Activated CD4-positive, alpha-beta T cell treated with anti-CD3 and anti-CD28 coated beads for 36 hours (primary cell): ENCODE measurements at regions of chr16 and their contacts with region 1.

Region 1: GRCh38 chr16:46689365-46690280 is at the start of gene ORC6:
- DNase-seq: peak; percentile 99
- ATAC-seq: peak; percentile 83
- H3K4me3 Mint-ChIP-seq: no peak within 1 kb of the TSS
- H3K27ac Mint-ChIP-seq: no peak within 1 kb of the TSS
- H3K4me1 Mint-ChIP-seq: peaks cover 43% of the 10 kb centered on the region
- H3K27me3 Mint-ChIP-seq: no peaks in the 10 kb centered on the region
- total RNA-seq, gene ORC6: 30.3 to 43.4 TPM

Region 2: GRCh38 chr16:46568472-46569230 is 121.0 kb before region 1 on chr16:
- CTCF ChIA-PET with region 1: no interaction called
- POLR2A ChIA-PET with region 1: no interaction called
- intact Hi-C with region 1: no loop called
- DNase-seq: no peak
- ATAC-seq: no peak
- H3K4me3 Mint-ChIP-seq: no peak overlapping the region
- H3K27ac Mint-ChIP-seq: no peak overlapping the region
- H3K4me1 Mint-ChIP-seq: no peaks in the 10 kb centered on the region
- H3K27me3 Mint-ChIP-seq: peaks cover 2% of the 10 kb centered on the region

Region 3: DNA sequence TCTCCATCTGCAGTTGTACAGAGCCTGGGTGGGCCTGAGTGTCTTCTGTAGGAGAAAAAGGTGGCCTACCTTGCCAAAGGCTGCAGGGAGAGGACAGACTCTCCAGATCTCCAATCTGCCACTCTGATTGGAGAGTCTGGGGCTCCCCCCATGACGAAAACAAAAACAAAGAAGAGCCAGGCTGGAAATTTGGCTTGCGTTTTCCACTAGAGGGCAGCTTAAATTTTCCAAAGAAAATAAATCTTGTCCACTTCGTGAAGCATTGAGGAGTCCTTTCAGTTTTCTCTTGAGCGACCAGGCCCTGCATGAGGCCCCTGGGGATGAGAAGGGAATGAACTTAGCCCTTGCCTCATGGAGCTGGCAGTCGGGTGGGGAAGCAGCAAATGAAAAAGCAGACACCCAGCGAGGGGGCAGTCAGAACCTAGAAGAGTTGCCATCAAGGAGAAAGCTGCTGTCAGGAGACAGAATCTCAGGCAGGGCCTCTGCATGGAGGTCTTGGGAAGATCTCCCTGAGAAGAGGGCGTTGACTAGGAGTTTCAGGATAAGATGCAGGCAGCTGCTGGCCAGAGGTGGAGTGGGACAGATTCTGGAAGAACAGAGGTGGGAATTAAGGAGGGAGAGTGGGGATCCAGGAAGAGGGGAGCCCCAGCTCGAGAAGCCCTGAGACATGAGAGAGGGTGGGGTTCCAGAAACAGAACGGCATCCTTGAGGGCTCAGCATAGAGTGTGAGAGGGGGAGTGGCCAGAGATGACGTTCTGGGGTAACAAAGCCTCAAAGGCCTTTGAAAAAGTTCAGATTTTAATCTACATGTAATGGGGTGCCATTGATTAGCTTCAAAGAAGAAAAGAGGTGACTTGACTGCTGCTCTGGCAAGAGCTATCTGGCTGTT is 60.0 kb before region 1 on chr16:
- CTCF ChIA-PET with region 1: no interaction called
- POLR2A ChIA-PET with region 1: no interaction called
- intact Hi-C with region 1: no loop called
- DNase-seq: no peak
- ATAC-seq: no peak
- H3K4me3 Mint-ChIP-seq: no peak overlapping the region
- H3K27ac Mint-ChIP-seq: no peak overlapping the region
- H3K4me1 Mint-ChIP-seq: no peaks in the 10 kb centered on the region
- H3K27me3 Mint-ChIP-seq: no peaks in the 10 kb centered on the region

Region 4: GRCh38 chr16:46673320-46674013 is 16.2 kb before region 1 on chr16:
- CTCF ChIA-PET with region 1: interaction called, 20 read pairs
- POLR2A ChIA-PET with region 1: no interaction called
- intact Hi-C with region 1: loop called in 1 of 2 experiments (anchors 1 kb)
- DNase-seq: peak; percentile 67
- ATAC-seq: peak; percentile 95
- H3K4me3 Mint-ChIP-seq: no peak overlapping the region
- H3K27ac Mint-ChIP-seq: no peak overlapping the region
- H3K4me1 Mint-ChIP-seq: no peaks in the 10 kb centered on the region
- H3K27me3 Mint-ChIP-seq: no peaks in the 10 kb centered on the region

Region 5: DNA sequence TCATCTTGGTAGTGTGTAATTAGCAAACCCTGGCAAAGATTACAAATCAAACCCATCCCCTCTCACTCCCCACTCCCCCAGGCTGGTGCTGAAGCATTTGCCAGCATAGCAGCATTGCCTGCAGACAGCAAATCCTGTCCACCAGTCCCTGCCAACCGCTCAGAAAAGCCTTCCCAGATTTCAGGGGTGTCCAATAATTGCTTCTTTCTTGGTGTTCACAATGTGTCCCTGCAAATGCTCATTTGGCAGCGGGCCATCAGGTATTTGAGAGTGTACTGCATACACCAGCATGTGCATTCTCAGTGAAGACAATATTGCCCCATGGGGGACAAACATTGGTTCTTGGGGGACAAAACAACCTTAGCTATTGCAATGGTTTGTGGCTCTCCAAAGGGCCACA is 28.1 kb after region 1 on chr16:
- CTCF ChIA-PET with region 1: no interaction called
- POLR2A ChIA-PET with region 1: no interaction called
- intact Hi-C with region 1: no loop called
- DNase-seq: no peak
- ATAC-seq: no peak
- H3K4me3 Mint-ChIP-seq: no peak overlapping the region
- H3K27ac Mint-ChIP-seq: no peak overlapping the region
- H3K4me1 Mint-ChIP-seq: no peaks in the 10 kb centered on the region
- H3K27me3 Mint-ChIP-seq: no peaks in the 10 kb centered on the region

Region 6: GRCh38 chr16:46728806-46729205 is 39.2 kb after region 1 on chr16:
- CTCF ChIA-PET with region 1: no interaction called
- POLR2A ChIA-PET with region 1: no interaction called
- intact Hi-C with region 1: no loop called
- DNase-seq: no peak
- ATAC-seq: no peak
- H3K4me3 Mint-ChIP-seq: no peak overlapping the region
- H3K27ac Mint-ChIP-seq: no peak overlapping the region
- H3K4me1 Mint-ChIP-seq: no peaks in the 10 kb centered on the region
- H3K27me3 Mint-ChIP-seq: no peaks in the 10 kb centered on the region

Region 7: GRCh38 chr16:46830902-46831647 is 141.5 kb after region 1 on chr16 and contains the start of gene C16orf87:
- CTCF ChIA-PET with region 1: no interaction called
- POLR2A ChIA-PET with region 1: no interaction called
- intact Hi-C with region 1: loop called (anchors 1 kb)
- DNase-seq: peak; percentile 95
- ATAC-seq: peak; percentile 96
- H3K4me3 Mint-ChIP-seq: peak within 1 kb of the TSS; percentile 93
- H3K27ac Mint-ChIP-seq: peak within 1 kb of the TSS; percentile 98
- H3K4me1 Mint-ChIP-seq: peaks cover 36% of the 10 kb centered on the region
- H3K27me3 Mint-ChIP-seq: no peaks in the 10 kb centered on the region
- total RNA-seq, gene C16orf87: 14.6 to 17.2 TPM

Region 8: DNA sequence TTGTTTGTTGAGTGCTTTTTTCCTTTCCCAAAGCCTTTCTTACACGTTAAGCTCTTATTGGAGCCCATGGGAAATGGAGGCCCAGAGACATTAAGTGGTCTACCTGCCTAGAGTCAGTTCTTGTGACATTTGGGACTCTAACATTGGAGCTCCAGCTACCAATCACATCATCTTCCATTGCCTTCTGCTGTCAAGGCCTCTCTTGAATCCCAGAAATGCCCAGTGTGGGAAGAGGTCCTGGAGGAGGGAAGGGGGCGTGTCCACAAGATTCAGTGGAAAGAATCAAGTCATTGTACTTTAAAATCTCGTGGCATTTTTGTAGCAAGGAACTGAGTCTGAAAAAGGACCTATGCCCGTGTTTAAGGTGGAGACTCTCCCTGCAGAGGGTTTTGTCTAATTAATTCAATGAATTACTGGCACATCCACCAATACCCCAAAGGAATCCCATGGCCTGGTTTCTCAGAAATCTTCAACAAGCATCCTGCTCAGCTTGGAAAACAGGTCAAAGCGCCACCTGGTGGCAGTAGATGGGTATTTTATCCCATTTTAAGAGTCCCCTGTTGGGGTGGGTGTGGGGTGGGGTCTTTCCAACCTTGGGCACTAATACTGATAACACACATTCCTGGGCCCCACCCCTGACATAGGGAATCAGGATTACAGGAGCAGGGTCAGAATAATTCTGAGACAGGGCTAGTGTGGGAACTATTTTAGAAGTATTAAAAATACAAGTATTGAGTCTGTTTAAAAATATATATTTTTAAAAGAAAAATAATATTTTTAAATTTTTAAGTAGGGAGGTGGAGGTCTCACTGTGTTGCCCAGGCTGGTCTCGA is 219.1 kb after region 1 on chr16:
- CTCF ChIA-PET with region 1: interaction called, 6 read pairs
- POLR2A ChIA-PET with region 1: no interaction called
- intact Hi-C with region 1: loop called in 1 of 2 experiments (anchors 5 kb)
- DNase-seq: peak; percentile 77
- ATAC-seq: peak; percentile 36
- H3K4me3 Mint-ChIP-seq: no peak overlapping the region
- H3K27ac Mint-ChIP-seq: no peak overlapping the region
- H3K4me1 Mint-ChIP-seq: peaks cover 5% of the 10 kb centered on the region
- H3K27me3 Mint-ChIP-seq: no peaks in the 10 kb centered on the region

Region 9: GRCh38 chr16:48385272-48386150 is 1695.9 kb after region 1 on chr16 and contains the start of gene SIAH1:
- CTCF ChIA-PET with region 1: no interaction called
- POLR2A ChIA-PET with region 1: no interaction called
- intact Hi-C with region 1: loop called in 1 of 2 experiments (anchors 10 kb)
- DNase-seq: peak; percentile 91
- ATAC-seq: peak; percentile 82
- H3K4me3 Mint-ChIP-seq: peak within 1 kb of the TSS; percentile 85
- H3K27ac Mint-ChIP-seq: peak within 1 kb of the TSS; percentile 90
- H3K4me1 Mint-ChIP-seq: peaks cover 21% of the 10 kb centered on the region
- H3K27me3 Mint-ChIP-seq: no peaks in the 10 kb centered on the region
- total RNA-seq, gene SIAH1: 13.1 to 13.3 TPM